ENCODE measurements at regions of chr6 and their contacts with region 1.

Region 1: DNA sequence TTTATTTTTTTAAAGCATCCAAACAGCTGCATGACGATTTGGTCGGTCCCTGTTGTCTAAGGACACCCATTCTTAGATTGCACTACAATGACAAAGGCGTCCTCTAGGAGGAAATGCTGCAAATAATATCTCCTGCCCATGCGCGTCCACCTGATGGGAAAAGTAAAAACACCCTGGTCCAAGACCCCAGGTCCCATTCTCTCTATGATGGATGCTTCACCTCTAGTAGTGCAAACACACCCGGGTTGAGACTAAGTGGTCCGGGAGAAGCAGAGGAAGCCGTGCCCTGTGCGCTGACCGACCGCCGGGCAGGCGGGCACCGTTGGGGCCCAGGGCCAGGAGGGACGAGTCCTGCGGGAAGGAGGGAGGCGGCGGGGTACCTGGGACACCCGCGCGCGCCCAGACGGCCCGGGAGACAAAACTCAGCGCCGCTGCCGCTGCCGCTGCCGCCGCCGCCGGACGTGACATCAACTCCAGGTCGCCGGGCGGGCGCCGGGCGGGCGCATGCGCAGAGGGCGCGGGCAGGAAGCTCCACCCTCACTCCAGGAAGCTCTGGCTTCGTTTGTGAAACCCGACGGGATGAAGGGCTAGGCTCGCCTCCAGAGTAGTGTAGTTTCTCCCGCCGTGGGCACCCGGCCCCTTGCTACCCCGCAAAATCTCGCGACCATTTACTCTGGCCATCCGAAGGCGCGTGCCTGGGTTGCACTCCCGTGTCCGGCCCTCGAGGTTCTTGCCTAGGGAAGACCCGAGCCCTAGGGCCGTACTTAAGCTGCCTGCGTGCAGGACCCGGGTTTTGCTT is at the start of gene TBC1D7:
- DNase-seq: peak; percentile 93
- ATAC-seq: peak; percentile 91
- H3K4me3 Mint-ChIP-seq: peak within 1 kb of the TSS; percentile 93
- H3K27ac Mint-ChIP-seq: peak within 1 kb of the TSS; percentile 93
- H3K4me1 Mint-ChIP-seq: peaks cover 22% of the 10 kb centered on the region
- H3K27me3 Mint-ChIP-seq: no peaks in the 10 kb centered on the region
- CTCF ChIP-seq: peak; percentile 16
- total RNA-seq, gene TBC1D7: 21.3 to 23.8 TPM

Region 2: DNA sequence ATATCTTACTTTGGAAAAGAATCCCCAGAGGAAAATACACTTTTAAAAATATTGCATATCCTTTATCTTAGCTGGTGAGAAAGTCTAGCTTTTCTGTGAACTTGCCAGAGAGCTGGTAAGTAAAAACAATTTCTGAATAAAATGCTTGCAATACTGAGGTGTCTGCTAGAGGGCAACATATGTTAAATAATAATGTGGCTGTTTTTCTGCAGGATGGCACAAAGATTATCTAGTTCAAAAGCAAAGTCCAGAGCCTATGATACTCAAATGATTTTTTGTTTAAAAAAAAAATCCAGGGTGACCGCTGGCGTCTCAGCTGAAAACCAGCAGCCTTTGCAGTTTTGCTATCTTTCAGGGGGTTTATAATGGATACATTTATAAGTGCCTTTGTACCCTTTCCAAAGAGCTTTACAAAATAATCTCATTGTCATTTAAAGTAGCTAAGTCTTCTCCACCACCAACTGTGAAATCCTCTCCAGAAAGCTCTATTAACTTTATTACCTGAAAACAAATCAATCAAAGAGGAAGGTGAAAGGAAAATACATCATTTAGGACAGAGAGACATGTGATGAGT is 416.8 kb before region 1 on chr6:
- CTCF ChIA-PET with region 1: interaction called, 6 read pairs
- POLR2A ChIA-PET with region 1: no interaction called
- intact Hi-C with region 1: loop called (anchors 5 kb)
- DNase-seq: no peak
- ATAC-seq: no peak
- H3K4me3 Mint-ChIP-seq: no peak overlapping the region
- H3K27ac Mint-ChIP-seq: no peak overlapping the region
- H3K4me1 Mint-ChIP-seq: no peaks in the 10 kb centered on the region
- H3K27me3 Mint-ChIP-seq: no peaks in the 10 kb centered on the region
- CTCF ChIP-seq: peak; percentile 30

Region 3: GRCh38 chr6:13194852-13195251 is 133.4 kb before region 1 on chr6:
- CTCF ChIA-PET with region 1: interaction called, 19 read pairs
- POLR2A ChIA-PET with region 1: no interaction called
- intact Hi-C with region 1: loop called (anchors 5 kb)
- DNase-seq: peak; percentile 46
- ATAC-seq: peak; percentile 37
- H3K4me3 Mint-ChIP-seq: no peak overlapping the region
- H3K27ac Mint-ChIP-seq: no peak overlapping the region
- H3K4me1 Mint-ChIP-seq: no peaks in the 10 kb centered on the region
- H3K27me3 Mint-ChIP-seq: peaks cover 12% of the 10 kb centered on the region
- CTCF ChIP-seq: peak; percentile 32

Region 4: GRCh38 chr6:13641315-13641714 is 313.0 kb after region 1 on chr6:
- CTCF ChIA-PET with region 1: no interaction called
- POLR2A ChIA-PET with region 1: no interaction called
- intact Hi-C with region 1: no loop called
- DNase-seq: no peak
- ATAC-seq: no peak
- H3K4me3 Mint-ChIP-seq: no peak overlapping the region
- H3K27ac Mint-ChIP-seq: peak overlapping the region; percentile 87
- H3K4me1 Mint-ChIP-seq: peaks cover 39% of the 10 kb centered on the region
- H3K27me3 Mint-ChIP-seq: no peaks in the 10 kb centered on the region
- CTCF ChIP-seq: no peak